ENCODE measurements at regions of chr7 and their contacts with region 1.

Region 1: DNA sequence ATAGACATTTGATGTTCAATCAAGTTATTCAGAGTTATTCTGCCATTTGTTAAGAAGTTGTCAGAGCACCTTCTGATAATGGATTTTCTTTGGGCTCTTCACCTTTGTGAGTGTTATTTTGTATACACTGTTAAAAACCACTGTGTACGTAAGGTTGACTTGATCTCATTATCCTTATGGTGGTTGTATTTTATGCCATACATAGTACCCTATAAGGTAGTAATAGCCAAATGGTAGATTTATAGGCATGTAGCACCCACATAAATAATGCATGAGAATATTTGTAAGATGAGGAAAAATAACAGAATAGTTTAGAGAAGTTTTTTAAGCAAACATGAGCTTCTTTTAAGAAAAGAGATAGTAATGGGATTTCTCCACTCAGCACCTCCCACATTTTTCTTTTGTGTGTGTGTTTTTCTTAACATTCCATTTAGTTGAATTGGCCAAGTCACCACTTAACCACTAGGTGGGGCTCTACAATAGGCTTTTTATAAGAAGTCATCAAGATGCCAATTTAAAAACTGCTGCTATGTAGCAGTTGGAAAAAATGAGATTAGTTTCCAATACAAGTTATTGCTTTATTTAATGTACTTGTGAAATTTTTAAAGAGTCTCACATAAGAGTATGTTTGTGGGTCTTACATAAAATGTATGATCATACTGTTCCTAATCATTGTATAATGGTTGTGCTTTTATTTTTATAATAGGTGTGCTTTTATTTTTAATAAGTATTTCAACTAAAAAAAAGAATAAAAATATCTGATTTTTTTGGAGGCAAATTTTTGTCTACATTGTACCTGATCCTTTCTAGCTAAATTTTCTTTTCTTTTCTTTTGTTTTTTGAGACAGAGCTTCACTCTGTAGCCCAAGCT is 41.1 kb upstream of the STMP1 start:
- DNase-seq: no peak
- H3K4me3 ChIP-seq: no peak overlapping the region
- H3K27ac ChIP-seq: no peak overlapping the region
- H3K4me1 ChIP-seq: no peaks in the 10 kb centered on the region
- H3K27me3 ChIP-seq: no peaks in the 10 kb centered on the region
- CTCF ChIP-seq: peak in 10 of 11 experiments; percentile 15 to 85 (median 74)
- POLR2A ChIP-seq: no peak

Region 2: GRCh38 chr7:135575296-135575695 is 45.9 kb before region 1 on chr7:
- intact Hi-C with region 1: loop called (anchors 5 kb)
- DNase-seq: no peak
- H3K4me3 ChIP-seq: no peak overlapping the region
- H3K27ac ChIP-seq: peak overlapping the region in 1 of 8 donors; percentile 30
- H3K4me1 ChIP-seq: peaks cover 0 to 8% (median 0%) of the 10 kb centered on the region in 6 donors
- H3K27me3 ChIP-seq: no peaks in the 10 kb centered on the region
- CTCF ChIP-seq: no peak
- POLR2A ChIP-seq: no peak

Region 3: GRCh38 chr7:135825406-135825805 is 204.2 kb after region 1 on chr7:
- intact Hi-C with region 1: no loop called
- DNase-seq: no peak
- H3K4me3 ChIP-seq: no peak overlapping the region
- H3K27ac ChIP-seq: no peak overlapping the region
- H3K4me1 ChIP-seq: no peaks in the 10 kb centered on the region
- H3K27me3 ChIP-seq: peaks cover 0 to 8% (median 0%) of the 10 kb centered on the region in 7 donors
- CTCF ChIP-seq: no peak
- POLR2A ChIP-seq: no peak